ENCODE measurements at regions of chr9 and their contacts with region 1.

Region 1: GRCh38 chr9:132669698-132670456 is at the start of gene DDX31:
- DNase-seq: peak; percentile 91
- ATAC-seq: peak; percentile 86
- H3K4me3 Mint-ChIP-seq: peak within 1 kb of the TSS; percentile 89
- H3K27ac Mint-ChIP-seq: peak within 1 kb of the TSS; percentile 90
- H3K4me1 Mint-ChIP-seq: peaks cover 49% of the 10 kb centered on the region
- H3K27me3 Mint-ChIP-seq: no peaks in the 10 kb centered on the region
- total RNA-seq, gene DDX31: 20.9 to 21.0 TPM

Region 2: DNA sequence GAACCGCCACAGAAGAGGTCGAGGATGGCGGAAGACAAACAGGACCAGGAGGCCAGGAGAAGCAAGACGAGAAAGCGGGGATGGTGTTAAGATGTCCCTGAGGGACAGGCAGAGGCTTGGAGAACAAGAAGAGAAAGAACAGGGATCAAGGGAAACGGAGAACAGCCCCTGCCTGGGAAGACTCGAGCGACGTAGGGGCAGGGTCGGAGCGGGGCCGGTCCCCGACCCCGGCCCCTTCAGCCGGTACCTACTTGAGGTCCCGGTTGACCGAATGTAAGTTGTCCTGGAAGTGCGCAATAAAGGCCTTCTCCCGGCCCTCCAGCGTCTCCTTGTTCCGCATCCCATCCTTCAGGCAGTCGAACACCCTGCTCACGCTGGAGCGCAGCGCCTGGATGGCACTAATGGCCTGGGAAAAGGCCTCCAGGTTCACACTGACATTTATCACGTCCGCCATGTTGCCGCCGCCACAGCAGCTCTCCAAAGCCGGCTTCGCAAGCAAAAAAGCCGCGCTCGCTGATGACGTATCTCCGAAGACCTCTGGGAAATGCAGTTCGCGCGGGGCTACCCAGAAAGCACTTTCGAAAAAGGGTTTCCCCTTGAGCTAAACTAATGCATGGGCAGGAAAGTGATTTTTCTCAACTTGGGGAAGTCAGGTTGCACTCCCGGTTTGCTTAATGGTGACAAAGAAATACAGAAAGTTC is 590.3 kb before region 1 on chr9 and contains the start of gene MED27:
- CTCF ChIA-PET with region 1: no interaction called
- POLR2A ChIA-PET with region 1: interaction called, 3 read pairs
- intact Hi-C with region 1: loop called in 1 of 2 experiments (anchors 1 kb)
- DNase-seq: peak; percentile 97
- ATAC-seq: peak; percentile 94
- H3K4me3 Mint-ChIP-seq: peak within 1 kb of the TSS; percentile 96
- H3K27ac Mint-ChIP-seq: peak within 1 kb of the TSS; percentile 86
- H3K4me1 Mint-ChIP-seq: peaks cover 41% of the 10 kb centered on the region
- H3K27me3 Mint-ChIP-seq: no peaks in the 10 kb centered on the region
- total RNA-seq, gene MED27: 29.1 to 32.5 TPM

Region 3: GRCh38 chr9:132507746-132508469 is 162.0 kb before region 1 on chr9:
- CTCF ChIA-PET with region 1: no interaction called
- POLR2A ChIA-PET with region 1: no interaction called
- intact Hi-C with region 1: no loop called
- DNase-seq: peak; percentile 82
- ATAC-seq: peak; percentile 68
- H3K4me3 Mint-ChIP-seq: no peak overlapping the region
- H3K27ac Mint-ChIP-seq: no peak overlapping the region
- H3K4me1 Mint-ChIP-seq: peaks cover 3% of the 10 kb centered on the region
- H3K27me3 Mint-ChIP-seq: peaks cover 3% of the 10 kb centered on the region

Region 4: GRCh38 chr9:132768932-132769905 is 99.3 kb after region 1 on chr9:
- CTCF ChIA-PET with region 1: interaction called, 5 read pairs
- POLR2A ChIA-PET with region 1: no interaction called
- intact Hi-C with region 1: loop called in 1 of 2 experiments (anchors 1 kb)
- DNase-seq: peak; percentile 82
- ATAC-seq: peak; percentile 75
- H3K4me3 Mint-ChIP-seq: peak overlapping the region; percentile 85
- H3K27ac Mint-ChIP-seq: peak overlapping the region; percentile 94
- H3K4me1 Mint-ChIP-seq: peaks cover 16% of the 10 kb centered on the region
- H3K27me3 Mint-ChIP-seq: no peaks in the 10 kb centered on the region

Region 5: GRCh38 chr9:132877824-132878694 is 208.2 kb after region 1 on chr9 and contains the start of gene AK8:
- CTCF ChIA-PET with region 1: no interaction called
- POLR2A ChIA-PET with region 1: interaction called, 7 read pairs
- intact Hi-C with region 1: loop called in 1 of 2 experiments (anchors 1 kb)
- DNase-seq: peak; percentile 86
- ATAC-seq: peak; percentile 76
- H3K4me3 Mint-ChIP-seq: peak within 1 kb of the TSS; percentile 73
- H3K27ac Mint-ChIP-seq: peak within 1 kb of the TSS; percentile 13
- H3K4me1 Mint-ChIP-seq: peaks cover 21% of the 10 kb centered on the region
- H3K27me3 Mint-ChIP-seq: no peaks in the 10 kb centered on the region
- total RNA-seq, gene AK8: 0.21 TPM in 1 of 2 experiments, not detected in the other

Region 6: GRCh38 chr9:133030317-133031129 is 360.6 kb after region 1 on chr9 and contains the start of gene GTF3C5:
- CTCF ChIA-PET with region 1: no interaction called
- POLR2A ChIA-PET with region 1: interaction called, 4 read pairs
- intact Hi-C with region 1: loop called in 1 of 2 experiments (anchors 2 kb)
- DNase-seq: peak; percentile 95
- ATAC-seq: peak; percentile 98
- H3K4me3 Mint-ChIP-seq: peak within 1 kb of the TSS; percentile 94
- H3K27ac Mint-ChIP-seq: peak within 1 kb of the TSS; percentile 95
- H3K4me1 Mint-ChIP-seq: peaks cover 41% of the 10 kb centered on the region
- H3K27me3 Mint-ChIP-seq: no peaks in the 10 kb centered on the region
- total RNA-seq, gene GTF3C5: 81.3 to 84.5 TPM